Caco-2 (cell line): ENCODE measurements at regions of chr14 and their contacts with region 1.

Region 1: DNA sequence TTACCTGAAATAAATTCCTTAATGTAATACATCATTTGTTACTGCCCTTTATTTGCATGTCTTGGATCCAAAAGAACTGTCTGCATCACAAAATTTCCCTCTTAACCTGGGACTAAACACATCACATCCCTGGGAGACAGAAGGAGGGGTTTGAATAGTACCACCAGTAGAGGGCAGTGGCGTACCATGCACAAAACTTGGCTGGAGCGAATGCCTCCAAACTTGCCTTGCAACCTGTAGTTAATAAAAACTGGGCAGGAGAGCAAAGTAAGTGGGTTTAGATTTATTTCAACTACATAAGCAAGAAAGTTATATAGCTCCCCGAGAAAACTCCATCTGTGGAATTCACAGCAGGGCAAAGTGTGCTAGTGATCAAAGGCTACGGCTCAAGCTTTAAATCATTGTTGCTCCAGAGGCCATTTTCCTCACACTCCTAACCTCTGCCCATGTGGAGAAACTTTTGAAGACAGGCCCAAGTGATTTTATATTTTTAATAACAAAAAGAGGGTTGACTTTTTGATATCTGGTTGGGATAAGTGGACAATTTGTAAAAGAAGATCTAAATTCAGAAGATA is 1176.7 kb upstream of the SEL1L start:
- DNase-seq: peak; percentile 60 to 77
- H3K4me3 ChIP-seq: no peak overlapping the region
- H3K4me3 Mint-ChIP-seq: no peak overlapping the region
- H3K27ac Mint-ChIP-seq: no peak overlapping the region
- H3K4me1 ChIP-seq: no peaks in the 10 kb centered on the region
- H3K4me1 Mint-ChIP-seq: no peaks in the 10 kb centered on the region
- H3K27me3 ChIP-seq: no peaks in the 10 kb centered on the region
- H3K27me3 Mint-ChIP-seq: peaks cover 6% of the 10 kb centered on the region
- CTCF ChIP-seq: peak; percentile 78 to 88

Region 2: DNA sequence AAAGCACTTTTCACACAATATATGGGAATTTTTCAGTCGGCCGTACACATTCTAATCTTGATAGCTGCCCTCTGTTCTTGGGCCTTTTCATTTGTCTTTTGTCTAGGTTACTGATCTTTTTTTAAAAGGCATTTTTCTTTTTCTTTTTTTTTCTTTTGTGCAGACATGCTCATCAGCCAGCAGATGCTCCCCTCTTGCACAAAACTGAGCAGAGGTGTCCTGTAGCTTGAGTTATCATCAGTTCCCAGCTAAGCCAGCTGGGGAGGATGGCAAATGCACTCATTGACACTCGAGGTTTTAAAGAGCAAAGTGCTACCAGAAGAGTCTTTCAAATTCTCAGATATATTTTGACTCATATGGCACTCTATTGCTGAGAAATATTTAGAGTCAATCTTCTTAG is 262.8 kb before region 1 on chr14:
- CTCF ChIA-PET with region 1: no interaction called
- POLR2A ChIA-PET with region 1: no interaction called
- intact Hi-C with region 1: loop called (anchors 1 kb)
- DNase-seq: peak; percentile 25 to 33
- H3K4me3 ChIP-seq: no peak overlapping the region
- H3K4me3 Mint-ChIP-seq: no peak overlapping the region
- H3K27ac Mint-ChIP-seq: no peak overlapping the region
- H3K4me1 ChIP-seq: no peaks in the 10 kb centered on the region
- H3K4me1 Mint-ChIP-seq: no peaks in the 10 kb centered on the region
- H3K27me3 ChIP-seq: no peaks in the 10 kb centered on the region
- H3K27me3 Mint-ChIP-seq: no peaks in the 10 kb centered on the region
- CTCF ChIP-seq: peak in 1 of 2 experiments; percentile 25

Region 3: DNA sequence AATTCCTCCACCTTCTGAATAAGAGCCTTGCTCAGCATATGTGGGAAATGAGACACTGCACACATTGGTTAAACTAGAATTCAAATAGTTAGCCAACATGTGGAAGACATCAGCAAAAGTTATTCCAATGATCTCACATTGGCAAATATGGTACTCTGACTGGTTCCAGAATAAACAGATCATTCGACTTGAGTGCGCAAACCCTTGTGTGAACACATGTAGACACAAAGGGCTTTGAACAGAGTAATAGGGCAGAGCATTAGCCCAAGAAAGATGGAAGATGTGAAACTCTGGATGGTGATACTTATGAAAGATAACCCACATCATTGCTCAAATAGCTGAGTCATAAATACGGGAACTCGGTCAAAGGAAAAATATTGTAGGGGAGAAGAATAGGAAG is 43.3 kb before region 1 on chr14:
- CTCF ChIA-PET with region 1: no interaction called
- POLR2A ChIA-PET with region 1: no interaction called
- intact Hi-C with region 1: no loop called
- DNase-seq: no peak
- H3K4me3 ChIP-seq: no peak overlapping the region
- H3K4me3 Mint-ChIP-seq: no peak overlapping the region
- H3K27ac Mint-ChIP-seq: no peak overlapping the region
- H3K4me1 ChIP-seq: no peaks in the 10 kb centered on the region
- H3K4me1 Mint-ChIP-seq: no peaks in the 10 kb centered on the region
- H3K27me3 ChIP-seq: no peaks in the 10 kb centered on the region
- H3K27me3 Mint-ChIP-seq: no peaks in the 10 kb centered on the region
- CTCF ChIP-seq: no peak

Region 4: DNA sequence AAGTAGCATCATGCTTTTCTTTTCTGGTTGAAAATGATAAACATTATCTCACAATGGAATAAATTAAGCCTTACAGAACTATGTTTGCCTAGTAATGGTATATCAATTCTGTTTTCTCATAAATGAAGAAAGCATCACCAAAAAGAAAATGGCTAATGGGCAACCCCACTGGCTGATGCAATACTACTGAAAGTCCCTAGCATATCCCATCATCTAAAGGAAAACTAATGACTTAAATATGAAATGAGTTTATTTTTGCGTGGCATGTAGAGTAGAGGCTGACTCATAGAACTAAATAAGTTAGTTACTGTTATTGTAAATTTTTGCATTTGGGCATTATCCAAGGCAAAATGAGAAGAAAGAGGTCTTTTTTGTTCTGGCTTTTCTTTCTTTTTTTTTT is 20.4 kb before region 1 on chr14:
- CTCF ChIA-PET with region 1: no interaction called
- POLR2A ChIA-PET with region 1: no interaction called
- intact Hi-C with region 1: no loop called
- DNase-seq: no peak
- H3K4me3 ChIP-seq: no peak overlapping the region
- H3K4me3 Mint-ChIP-seq: no peak overlapping the region
- H3K27ac Mint-ChIP-seq: no peak overlapping the region
- H3K4me1 ChIP-seq: no peaks in the 10 kb centered on the region
- H3K4me1 Mint-ChIP-seq: no peaks in the 10 kb centered on the region
- H3K27me3 ChIP-seq: no peaks in the 10 kb centered on the region
- H3K27me3 Mint-ChIP-seq: peaks cover 5% of the 10 kb centered on the region
- CTCF ChIP-seq: no peak

Region 5: GRCh38 chr14:82855912-82856391 is 145.6 kb after region 1 on chr14:
- CTCF ChIA-PET with region 1: no interaction called
- POLR2A ChIA-PET with region 1: no interaction called
- intact Hi-C with region 1: loop called (anchors 10 kb)
- DNase-seq: peak in 1 of 2 experiments; percentile 12
- H3K4me3 ChIP-seq: no peak overlapping the region
- H3K4me3 Mint-ChIP-seq: no peak overlapping the region
- H3K27ac Mint-ChIP-seq: no peak overlapping the region
- H3K4me1 ChIP-seq: no peaks in the 10 kb centered on the region
- H3K4me1 Mint-ChIP-seq: no peaks in the 10 kb centered on the region
- H3K27me3 ChIP-seq: no peaks in the 10 kb centered on the region
- H3K27me3 Mint-ChIP-seq: peaks cover 3% of the 10 kb centered on the region
- CTCF ChIP-seq: peak; percentile 36 to 50

Region 6: DNA sequence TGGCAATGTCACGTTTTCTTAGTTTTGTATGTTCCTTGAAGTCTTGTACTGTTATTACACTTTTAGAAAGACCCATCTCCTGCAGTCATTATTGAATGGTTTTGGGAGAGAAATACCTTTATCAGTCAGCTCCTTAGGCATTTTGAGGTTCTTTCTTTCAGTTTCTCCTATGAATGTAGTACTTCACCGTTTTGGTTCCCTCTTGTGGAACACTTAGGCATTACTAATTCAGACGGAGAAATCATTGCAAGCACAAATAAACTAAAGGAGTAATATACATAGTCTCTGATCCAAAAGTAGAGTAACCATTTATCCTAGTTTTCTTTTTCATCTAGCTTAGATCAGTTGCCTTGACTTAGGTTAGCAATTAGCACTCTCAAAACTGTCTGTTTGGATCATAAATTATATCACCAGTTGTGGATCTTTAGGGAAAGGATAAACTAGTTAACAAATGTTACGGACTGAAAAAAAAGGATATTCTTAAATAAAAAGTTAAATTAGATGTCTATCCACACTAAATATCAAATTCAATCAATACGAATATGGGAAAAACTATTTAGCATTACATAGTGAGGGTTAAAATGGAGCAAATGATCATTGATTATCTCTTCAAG is 361.6 kb after region 1 on chr14:
- CTCF ChIA-PET with region 1: no interaction called
- POLR2A ChIA-PET with region 1: no interaction called
- intact Hi-C with region 1: loop called (anchors 1 kb)
- DNase-seq: peak in 1 of 2 experiments; percentile 33
- H3K4me3 ChIP-seq: no peak overlapping the region
- H3K4me3 Mint-ChIP-seq: no peak overlapping the region
- H3K27ac Mint-ChIP-seq: no peak overlapping the region
- H3K4me1 ChIP-seq: no peaks in the 10 kb centered on the region
- H3K4me1 Mint-ChIP-seq: no peaks in the 10 kb centered on the region
- H3K27me3 ChIP-seq: no peaks in the 10 kb centered on the region
- H3K27me3 Mint-ChIP-seq: no peaks in the 10 kb centered on the region
- CTCF ChIP-seq: peak; percentile 50 to 56

Region 7: GRCh38 chr14:83463500-83464098 is 753.2 kb after region 1 on chr14:
- CTCF ChIA-PET with region 1: no interaction called
- POLR2A ChIA-PET with region 1: no interaction called
- intact Hi-C with region 1: loop called (anchors 5 kb)
- DNase-seq: peak; percentile 43 to 52
- H3K4me3 ChIP-seq: no peak overlapping the region
- H3K4me3 Mint-ChIP-seq: no peak overlapping the region
- H3K27ac Mint-ChIP-seq: no peak overlapping the region
- H3K4me1 ChIP-seq: no peaks in the 10 kb centered on the region
- H3K4me1 Mint-ChIP-seq: no peaks in the 10 kb centered on the region
- H3K27me3 ChIP-seq: no peaks in the 10 kb centered on the region
- H3K27me3 Mint-ChIP-seq: no peaks in the 10 kb centered on the region
- CTCF ChIP-seq: peak; percentile 32 to 59